AG04449 (cell line): ENCODE measurements at regions of chr10 and their contacts with region 1.

Region 1: DNA sequence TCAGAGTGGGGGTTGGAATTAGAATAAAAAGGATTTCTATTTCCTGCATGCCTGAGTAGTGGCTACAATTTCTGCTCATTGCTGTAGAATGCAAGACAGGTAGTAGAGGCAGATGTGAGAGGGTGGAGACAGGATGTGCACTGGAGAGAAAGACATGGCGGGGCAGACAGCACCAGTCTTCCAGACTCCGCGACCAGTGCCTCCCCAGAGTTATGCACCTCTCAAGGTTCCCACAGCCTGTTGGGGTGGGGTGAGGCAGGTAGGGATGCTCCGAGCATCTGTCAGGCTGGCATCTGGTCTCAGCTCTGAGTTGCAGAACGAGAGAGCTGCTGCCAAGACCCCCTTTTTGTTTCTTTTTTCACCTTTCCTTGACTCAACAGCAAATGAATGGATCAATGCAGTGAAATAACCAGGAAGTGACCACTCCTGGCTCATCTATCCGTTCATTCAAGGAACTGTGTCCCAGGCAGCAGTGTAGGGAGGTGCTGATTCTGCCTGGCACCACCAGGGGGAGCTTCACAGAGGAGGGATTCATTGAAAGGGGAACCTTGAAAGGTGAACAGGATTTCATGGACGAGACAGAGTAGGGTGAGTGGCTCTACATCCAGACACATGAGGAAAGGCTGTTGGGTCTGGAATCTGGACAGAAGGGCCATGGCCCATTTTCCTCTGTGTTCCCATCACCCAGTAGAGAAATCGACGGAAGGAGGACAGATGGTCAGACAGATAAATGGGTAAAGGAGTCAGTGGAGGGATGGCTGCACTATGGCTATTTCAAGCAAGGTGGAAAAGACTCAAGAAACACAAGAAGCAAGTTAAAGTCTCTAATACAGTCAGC is 17.2 kb upstream of the SLC18A3 start:
- DNase-seq: no peak
- H3K4me3 ChIP-seq: no peak overlapping the region
- CTCF ChIP-seq: peak; percentile 96

Region 2: DNA sequence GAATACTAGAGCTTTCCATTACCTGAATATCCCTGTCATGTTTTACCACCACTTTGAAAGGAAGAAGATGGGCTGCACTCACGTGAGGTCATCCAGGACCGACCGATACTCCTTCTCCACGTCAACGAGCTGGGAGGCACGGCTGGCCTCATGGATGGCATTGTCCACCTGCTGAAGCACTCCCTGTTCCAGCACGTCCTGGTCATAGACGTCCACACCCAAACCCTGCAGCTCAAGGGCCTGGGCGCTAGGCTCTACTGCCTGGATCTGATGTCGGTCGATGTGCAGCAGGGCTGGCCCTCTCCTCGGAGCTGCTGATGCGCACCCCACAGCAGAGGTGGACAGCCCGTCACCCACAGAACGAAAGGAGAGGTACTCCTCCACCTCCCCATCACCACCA is 60.5 kb before region 1 on chr10:
- CTCF ChIA-PET with region 1: interaction called, 12 read pairs
- POLR2A ChIA-PET with region 1: no interaction called
- DNase-seq: no peak
- H3K4me3 ChIP-seq: no peak overlapping the region
- CTCF ChIP-seq: no peak

Region 3: DNA sequence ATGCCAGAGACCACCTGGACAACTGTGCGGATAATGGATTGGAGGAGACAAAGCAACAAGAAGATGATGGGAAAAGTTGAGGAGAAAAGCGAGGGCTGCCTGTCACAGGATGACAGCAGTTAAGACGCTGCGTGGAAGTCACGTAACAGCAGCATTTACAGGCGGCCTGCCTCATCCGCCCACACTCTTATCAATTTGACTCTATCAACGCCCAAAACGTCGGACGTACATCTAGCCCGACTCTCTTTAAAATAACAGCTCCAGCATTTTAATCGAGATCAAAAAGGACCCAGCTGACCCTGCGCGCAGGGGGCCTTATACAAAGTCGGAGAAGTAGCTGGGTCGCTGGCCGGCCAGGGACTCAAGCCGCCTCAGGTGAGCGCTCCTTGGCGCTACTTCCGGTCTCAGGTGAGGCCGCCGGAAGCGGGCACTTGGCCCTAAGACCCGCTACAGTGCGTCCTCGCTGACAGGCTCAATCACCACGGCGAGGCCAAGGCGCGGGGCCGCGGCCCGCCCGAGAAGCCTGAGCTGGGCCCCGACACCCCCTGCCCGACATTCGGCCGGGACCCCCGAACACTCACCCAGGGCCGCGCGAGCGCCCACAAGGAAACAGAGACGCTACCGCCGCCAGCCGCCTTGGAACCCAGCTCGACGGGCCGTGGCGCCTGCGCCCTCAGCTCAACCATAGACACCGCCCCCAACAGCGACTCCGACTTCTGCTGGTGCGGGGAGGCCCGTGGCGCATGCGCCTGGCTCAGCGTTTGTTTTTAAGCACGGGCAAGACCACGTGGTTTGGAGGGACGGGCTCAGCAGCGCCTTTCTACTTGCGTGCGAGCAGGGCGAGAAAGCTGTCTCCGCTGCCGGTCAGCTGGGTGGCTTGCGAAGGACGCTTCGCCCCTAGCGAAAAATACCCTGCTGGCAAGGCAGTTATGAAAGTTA is 54.3 kb before region 1 on chr10 and contains the start of gene ERCC6:
- CTCF ChIA-PET with region 1: interaction called, 22 read pairs
- POLR2A ChIA-PET with region 1: no interaction called
- DNase-seq: peak; percentile 91
- H3K4me3 ChIP-seq: peak within 1 kb of the TSS; percentile 75
- CTCF ChIP-seq: no peak

Region 4: GRCh38 chr10:49568235-49568634 is 24.7 kb before region 1 on chr10:
- CTCF ChIA-PET with region 1: interaction called, 11 read pairs
- POLR2A ChIA-PET with region 1: no interaction called
- DNase-seq: no peak
- H3K4me3 ChIP-seq: no peak overlapping the region
- CTCF ChIP-seq: no peak

Region 5: DNA sequence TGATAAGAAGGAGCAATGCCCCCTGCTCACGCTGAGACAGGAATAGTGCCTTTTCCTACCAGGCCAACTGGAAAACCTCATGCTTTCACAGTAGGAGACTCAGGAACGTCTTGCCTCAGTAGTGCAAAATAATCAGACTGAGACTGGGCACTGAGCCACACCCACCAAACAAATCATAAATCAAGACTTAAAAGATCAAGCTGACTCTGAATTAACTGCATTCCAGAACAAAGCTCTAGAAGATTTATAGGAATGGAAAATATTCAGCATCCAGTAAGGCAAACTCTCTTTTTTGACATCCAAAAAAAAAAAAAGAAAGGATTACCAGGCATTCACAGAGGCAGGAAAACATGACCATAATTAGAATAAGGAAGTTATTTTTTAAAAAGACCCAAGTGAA is 13.3 kb before region 1 on chr10:
- CTCF ChIA-PET with region 1: interaction called, 15 read pairs
- POLR2A ChIA-PET with region 1: no interaction called
- DNase-seq: no peak
- H3K4me3 ChIP-seq: no peak overlapping the region
- CTCF ChIP-seq: no peak

Region 6: GRCh38 chr10:49606981-49607535 is 14.1 kb after region 1 on chr10:
- CTCF ChIA-PET with region 1: interaction called, 46 read pairs
- POLR2A ChIA-PET with region 1: no interaction called
- DNase-seq: no peak
- H3K4me3 ChIP-seq: no peak overlapping the region
- CTCF ChIP-seq: no peak

Region 7: GRCh38 chr10:50224330-50224952 is 631.5 kb after region 1 on chr10:
- CTCF ChIA-PET with region 1: interaction called, 43 read pairs
- POLR2A ChIA-PET with region 1: no interaction called
- DNase-seq: peak; percentile 23
- H3K4me3 ChIP-seq: no peak overlapping the region
- CTCF ChIP-seq: peak; percentile 76